A673 (cell line): ENCODE measurements at regions of chr11 and their contacts with region 1.

Region 1: DNA sequence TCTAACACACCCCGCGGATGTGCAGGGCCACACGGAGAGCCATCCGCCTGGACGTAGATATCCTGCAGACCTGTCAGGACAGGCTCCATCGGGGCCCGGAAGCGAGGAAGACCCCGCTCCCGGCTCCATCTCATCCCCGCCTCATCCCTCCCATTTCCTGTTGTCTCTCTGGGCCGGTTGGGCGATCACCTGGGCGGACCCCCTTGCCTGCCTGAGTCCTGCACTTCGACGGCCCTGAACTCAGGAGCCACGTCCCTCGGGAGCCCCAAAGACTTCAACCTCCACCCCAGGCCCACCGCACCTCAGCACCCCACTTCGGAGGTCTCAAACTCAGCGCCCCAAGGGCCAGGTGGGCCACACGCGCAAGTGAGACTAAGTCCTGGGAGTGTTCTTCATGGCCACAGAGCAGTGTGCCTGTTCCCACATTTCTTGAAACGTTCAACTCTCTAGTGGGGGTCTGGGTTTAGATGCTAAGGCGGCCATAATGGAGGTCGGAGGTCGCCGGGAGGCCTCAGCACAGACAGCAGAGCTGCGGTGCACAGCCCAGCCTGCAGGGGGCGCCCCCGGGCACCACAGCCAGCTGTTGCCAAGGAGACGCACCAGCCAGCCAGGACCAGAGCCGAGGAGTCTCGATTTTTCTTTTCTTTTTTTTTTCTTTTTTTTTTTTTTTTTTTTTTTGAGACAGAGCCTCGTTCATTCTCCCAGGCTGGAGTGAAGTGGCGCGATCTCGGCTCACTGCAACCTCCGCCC is 26.0 kb upstream of the FADD start:
- DNase-seq: peak; percentile 61
- H3K4me3 ChIP-seq: no peak overlapping the region
- H3K27ac ChIP-seq: no peak overlapping the region
- H3K4me1 ChIP-seq: no peaks in the 10 kb centered on the region
- H3K27me3 ChIP-seq: no peaks in the 10 kb centered on the region
- CTCF ChIP-seq: peak; percentile 84

Region 2: DNA sequence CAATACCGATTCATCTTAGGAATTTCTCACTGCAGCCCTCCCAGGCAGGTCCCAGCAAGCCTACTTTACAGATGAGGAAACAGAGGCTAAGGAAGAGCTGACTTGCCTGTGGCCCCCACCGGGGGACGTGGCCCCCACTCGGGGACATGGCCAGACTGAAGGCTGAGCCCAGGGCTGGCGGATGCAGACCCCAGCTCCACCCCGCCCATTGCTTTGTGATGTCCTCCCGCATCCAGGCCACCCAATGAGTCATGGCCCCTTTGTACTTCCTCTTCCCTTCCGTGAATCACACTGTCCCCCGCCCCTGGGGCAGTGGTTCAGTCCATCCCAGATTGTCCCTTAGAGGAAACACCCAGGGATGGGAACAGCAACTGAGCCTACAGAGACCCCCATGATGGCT is 215.0 kb before region 1 on chr11:
- CTCF ChIA-PET with region 1: interaction called, 4 read pairs
- POLR2A ChIA-PET with region 1: interaction called, 13 read pairs
- intact Hi-C with region 1: no loop called
- DNase-seq: no peak
- H3K4me3 ChIP-seq: no peak overlapping the region
- H3K27ac ChIP-seq: no peak overlapping the region
- H3K4me1 ChIP-seq: no peaks in the 10 kb centered on the region
- H3K27me3 ChIP-seq: no peaks in the 10 kb centered on the region
- CTCF ChIP-seq: no peak

Region 3: DNA sequence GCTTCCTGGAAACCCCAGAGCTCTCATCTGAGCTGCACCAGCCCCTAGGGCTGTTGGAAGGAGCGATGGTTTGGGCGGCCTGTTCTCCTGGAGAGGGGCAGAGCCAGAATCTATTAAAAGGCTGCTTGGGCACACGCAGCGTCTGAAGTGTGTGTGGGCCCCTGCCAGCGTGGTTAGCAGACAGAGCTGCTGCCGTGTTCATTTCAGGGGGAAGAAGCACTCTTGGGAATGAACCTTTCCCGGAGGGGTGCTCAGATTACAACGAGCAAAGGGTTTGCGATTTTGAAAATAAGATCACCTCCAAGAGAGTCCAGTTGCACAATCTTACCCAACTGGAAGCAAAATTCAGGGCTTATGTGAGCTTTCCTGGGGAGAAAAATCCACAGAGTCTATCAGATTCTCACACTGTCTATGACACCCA is 86.1 kb before region 1 on chr11:
- CTCF ChIA-PET with region 1: interaction called, 14 read pairs
- POLR2A ChIA-PET with region 1: no interaction called
- intact Hi-C with region 1: no loop called
- DNase-seq: peak; percentile 71
- H3K4me3 ChIP-seq: no peak overlapping the region
- H3K27ac ChIP-seq: peak overlapping the region; percentile 22
- H3K4me1 ChIP-seq: peaks cover 18% of the 10 kb centered on the region
- H3K27me3 ChIP-seq: no peaks in the 10 kb centered on the region
- CTCF ChIP-seq: no peak